AG04449 (cell line): ENCODE measurements at regions of chr11 and their contacts with region 1.

Region 1: DNA sequence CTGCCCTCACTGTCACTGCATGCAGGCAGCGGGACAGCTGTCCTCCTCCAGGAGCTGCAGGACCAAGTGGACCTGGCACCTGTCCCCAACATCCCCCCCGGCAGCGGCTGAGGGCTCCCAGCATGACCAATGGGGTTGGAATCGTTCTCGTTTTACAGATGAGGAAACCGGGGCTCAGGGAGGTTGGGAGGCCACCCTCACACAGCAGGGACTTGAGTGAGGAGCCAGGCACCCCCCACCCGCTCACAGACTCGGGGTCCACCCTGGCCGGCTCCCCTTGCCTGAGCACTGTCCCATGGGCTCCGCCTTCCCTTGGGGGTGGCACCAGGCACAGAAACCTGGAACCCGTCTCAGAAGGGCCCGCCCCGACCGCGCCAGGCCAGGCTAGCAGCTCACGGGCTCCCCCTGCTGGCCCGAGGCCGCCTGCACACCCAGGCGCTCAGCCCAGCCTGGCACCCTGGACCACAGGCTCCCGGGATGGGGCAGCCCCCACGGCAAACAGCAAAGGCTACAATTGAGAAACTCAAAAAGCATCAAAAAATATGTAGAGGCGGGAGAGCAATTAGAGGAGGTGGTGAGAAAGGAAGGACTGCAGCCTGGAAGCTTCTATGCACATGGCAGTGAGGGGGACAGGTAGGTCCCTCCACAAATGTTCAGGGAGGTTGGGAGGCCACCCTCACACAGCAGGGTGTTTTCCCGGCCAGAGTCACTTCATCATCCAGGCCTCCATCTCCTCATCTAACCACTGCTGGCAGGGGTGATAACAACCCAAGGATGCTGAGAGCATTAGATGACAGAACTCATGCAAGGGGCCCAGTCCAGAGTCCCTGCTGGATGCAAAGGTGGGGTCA is 12.8 kb downstream of the MACROD1 start:
- DNase-seq: no peak
- H3K4me3 ChIP-seq: no peak overlapping the region
- CTCF ChIP-seq: peak; percentile 99

Region 2: GRCh38 chr11:63974259-63975143 is 178.6 kb before region 1 on chr11 and contains the start of gene COX8A:
- CTCF ChIA-PET with region 1: interaction called, 10 read pairs
- POLR2A ChIA-PET with region 1: no interaction called
- DNase-seq: peak; percentile 98
- H3K4me3 ChIP-seq: peak within 1 kb of the TSS; percentile 98
- CTCF ChIP-seq: peak; percentile 31

Region 3: GRCh38 chr11:64000026-64000739 is 152.9 kb before region 1 on chr11:
- CTCF ChIA-PET with region 1: interaction called, 591 read pairs
- POLR2A ChIA-PET with region 1: interaction called, 6 read pairs
- DNase-seq: no peak
- H3K4me3 ChIP-seq: peak overlapping the region; percentile 36
- CTCF ChIP-seq: peak; percentile 86

Region 4: DNA sequence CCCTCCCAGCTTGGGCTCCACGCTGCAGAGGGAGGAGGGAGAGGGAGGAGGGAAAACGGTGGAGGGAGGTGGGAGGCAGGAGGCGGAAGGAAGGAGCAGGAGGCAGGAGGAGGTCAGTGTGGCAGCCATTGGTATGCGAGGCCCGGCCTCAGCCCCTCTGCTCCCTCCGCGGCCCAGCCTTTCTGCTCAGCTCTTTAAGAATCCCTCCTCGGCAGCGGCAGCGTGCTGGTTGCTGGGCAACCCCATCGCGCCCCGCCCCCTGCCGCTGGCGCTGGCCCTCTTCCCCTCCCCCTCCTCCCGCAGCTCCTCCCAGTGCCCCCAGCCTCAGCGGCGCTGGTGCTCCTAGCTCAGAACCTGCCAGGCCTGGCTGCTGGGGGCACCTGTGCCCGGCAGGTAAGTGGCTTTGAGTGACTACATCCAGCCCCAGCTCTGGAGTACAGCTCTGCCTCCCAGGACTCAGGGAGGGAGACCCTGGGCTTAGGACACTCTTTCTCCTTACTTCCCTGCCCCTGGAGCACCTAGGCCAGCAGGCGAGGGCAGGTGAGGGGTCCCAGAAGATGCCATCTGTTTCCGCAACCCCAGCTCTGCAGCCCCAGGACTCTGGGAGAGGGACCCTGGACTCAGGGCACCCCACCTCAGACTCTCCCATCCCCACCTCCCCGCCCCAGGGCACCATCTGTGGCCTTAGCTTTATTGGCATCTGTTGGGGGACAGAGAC is 124.5 kb before region 1 on chr11:
- CTCF ChIA-PET with region 1: interaction called, 11 read pairs
- POLR2A ChIA-PET with region 1: no interaction called
- DNase-seq: no peak
- H3K4me3 ChIP-seq: no peak overlapping the region
- CTCF ChIP-seq: no peak

Region 5: GRCh38 chr11:64120951-64121569 is 32.0 kb before region 1 on chr11:
- CTCF ChIA-PET with region 1: interaction called, 12 read pairs
- POLR2A ChIA-PET with region 1: no interaction called
- DNase-seq: peak; percentile 4
- H3K4me3 ChIP-seq: no peak overlapping the region
- CTCF ChIP-seq: no peak

Region 6: DNA sequence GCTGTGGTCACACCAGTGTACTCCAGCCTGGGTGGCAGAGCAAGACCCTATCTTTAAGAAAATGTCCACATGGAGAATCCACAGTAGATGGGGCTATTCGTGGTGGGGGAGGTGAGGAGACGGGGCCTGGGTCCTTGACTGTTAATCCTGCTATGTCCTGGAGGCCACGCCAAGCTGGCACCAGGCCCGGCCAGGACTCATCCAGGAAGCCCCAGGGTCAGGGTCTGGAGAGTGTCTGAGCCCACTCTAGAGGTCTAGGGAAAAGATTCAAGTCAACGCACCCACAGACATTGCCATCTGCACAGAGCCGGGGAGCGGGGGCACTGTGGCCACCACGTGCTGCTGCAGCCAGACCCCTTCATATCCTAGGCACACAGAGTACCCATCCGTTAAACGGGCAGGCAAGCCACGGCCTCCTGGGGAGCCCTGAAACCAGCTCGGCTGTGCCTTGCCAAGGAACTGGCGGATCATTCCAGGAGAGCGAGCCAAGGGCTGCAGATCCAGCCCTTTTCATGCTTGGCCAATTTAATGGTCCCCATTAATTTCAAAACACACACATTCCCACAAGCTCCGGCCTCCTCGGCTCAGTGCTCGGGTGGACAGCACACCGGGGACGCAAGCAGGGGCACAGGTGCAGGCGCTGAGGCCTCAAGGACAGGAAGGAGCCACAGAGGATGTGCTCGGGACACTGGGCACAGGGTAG is 11.8 kb before region 1 on chr11:
- CTCF ChIA-PET with region 1: interaction called, 67 read pairs
- POLR2A ChIA-PET with region 1: no interaction called
- DNase-seq: no peak
- H3K4me3 ChIP-seq: no peak overlapping the region
- CTCF ChIP-seq: no peak